GM23248 (cell line): ENCODE measurements at regions of chr1 and their contacts with region 1.

Region 1: DNA sequence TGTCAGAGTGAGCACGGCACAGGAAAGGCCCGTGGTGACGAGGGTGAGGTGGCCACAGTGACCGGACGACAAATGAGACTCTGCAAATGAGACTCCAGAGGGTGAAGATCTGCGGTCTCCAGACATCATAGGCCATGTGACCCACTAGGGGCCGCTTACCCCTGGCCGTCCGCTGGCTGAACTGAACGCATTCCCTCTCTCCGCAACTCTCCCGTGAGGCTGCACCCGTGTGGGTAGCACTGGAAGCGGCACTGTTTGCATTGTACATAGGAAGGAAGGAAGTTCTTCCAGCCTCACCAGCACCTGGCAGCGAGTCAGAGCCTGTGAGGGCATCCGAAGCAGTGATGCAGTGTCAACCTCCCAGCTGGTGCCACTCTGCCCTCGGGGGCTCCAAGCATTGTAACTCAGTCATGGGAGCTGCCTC is 23.6 kb upstream of the SPSB1 start:
- DNase-seq: no peak
- H3K4me3 ChIP-seq: no peak overlapping the region
- H3K27ac ChIP-seq: no peak overlapping the region
- H3K4me1 ChIP-seq: 0 out of 2 replicates have a peak, but pooled peaks cover 3% of the 10 kb centered on the region
- H3K27me3 ChIP-seq: no peaks in the 10 kb centered on the region

Region 2: GRCh38 chr1:9455487-9456234 is 186.6 kb after region 1 on chr1:
- in situ Hi-C with region 1: loop called (anchors 10 kb)
- DNase-seq: peak; percentile 70
- H3K4me3 ChIP-seq: no peak overlapping the region
- H3K27ac ChIP-seq: no peak overlapping the region
- H3K4me1 ChIP-seq: no peaks in the 10 kb centered on the region
- H3K27me3 ChIP-seq: no peaks in the 10 kb centered on the region

Region 3: DNA sequence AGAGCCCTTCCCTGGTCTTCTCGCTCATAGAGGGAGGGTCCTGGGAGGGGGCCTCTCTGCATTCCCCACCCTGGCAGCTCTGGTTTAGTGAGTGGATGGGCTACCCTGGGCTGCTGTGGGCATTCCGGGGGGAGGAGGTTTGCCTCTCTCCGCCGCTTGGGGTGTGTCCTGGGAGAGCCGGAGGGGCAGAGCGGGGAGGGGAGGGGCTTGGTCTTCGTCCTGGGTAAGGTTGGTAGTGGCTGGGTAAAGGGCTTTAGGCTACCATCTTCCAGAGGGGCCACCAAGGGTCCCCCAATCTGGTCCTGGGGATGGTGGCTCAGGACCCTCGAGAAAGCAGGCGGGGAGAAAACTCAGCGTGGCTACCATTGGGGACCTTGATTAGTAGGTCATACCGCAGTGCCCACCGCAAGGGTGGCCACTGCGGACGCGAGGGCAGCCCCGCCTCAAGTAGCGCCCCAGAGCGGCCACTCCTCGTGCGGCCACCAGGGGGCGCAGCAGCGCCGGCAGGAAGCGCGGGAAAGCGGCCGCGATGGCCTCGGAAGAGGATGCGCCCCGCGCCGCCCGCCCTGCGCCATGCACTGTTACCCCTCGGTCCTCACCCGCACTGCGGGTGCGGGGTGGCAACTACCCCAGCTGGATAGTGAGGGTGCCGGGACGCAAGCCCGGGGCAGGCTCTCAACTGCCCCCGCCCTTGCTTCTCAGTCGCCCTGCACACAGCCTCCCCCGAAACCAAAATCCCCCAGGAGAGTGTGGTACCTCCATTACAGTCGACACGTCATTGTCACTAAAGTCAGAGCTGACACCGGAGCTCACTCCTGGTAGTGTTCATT is 226.1 kb after region 1 on chr1:
- in situ Hi-C with region 1: loop called (anchors 10 kb)
- DNase-seq: peak; percentile 67
- H3K4me3 ChIP-seq: peak overlapping the region; percentile 46
- H3K27ac ChIP-seq: no peak overlapping the region
- H3K4me1 ChIP-seq: no peaks in the 10 kb centered on the region
- H3K27me3 ChIP-seq: no peaks in the 10 kb centered on the region